ENCODE measurements at regions of chr7 and their contacts with region 1.

Region 1: DNA sequence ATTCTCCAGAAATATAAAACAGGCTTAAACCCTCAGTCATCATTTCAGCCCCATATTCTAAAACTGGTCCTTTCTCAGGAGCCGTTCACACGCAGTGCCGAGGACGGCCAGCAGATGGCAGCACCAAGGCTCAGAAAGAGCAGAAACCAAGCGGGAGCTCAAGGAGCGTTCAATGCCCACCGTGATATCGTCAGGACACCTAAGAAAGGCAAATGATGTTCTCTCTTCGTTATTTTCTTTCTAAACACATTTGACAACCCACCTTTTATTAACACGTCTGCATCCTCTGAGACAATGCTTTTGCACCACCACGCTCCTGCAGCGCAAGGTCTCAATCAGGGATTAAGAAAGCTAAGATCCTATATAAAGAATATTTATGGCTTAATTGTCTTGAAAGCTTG is 45.7 kb upstream of the RBM33 start:
- DNase-seq: peak; percentile 68 to 94 (median 78)
- ATAC-seq: peak; percentile 87
- H3K4me3 ChIP-seq: no peak overlapping the region
- H3K27ac ChIP-seq: no peak overlapping the region
- H3K4me1 ChIP-seq: peaks cover 0 to 37% of the 10 kb centered on the region in 2 donors
- H3K27me3 ChIP-seq: peaks cover 0 to 12% of the 10 kb centered on the region in 2 donors
- CTCF ChIP-seq: peak; percentile 97 to 99

Region 2: GRCh38 chr7:155763691-155764437 is 165.1 kb after region 1 on chr7:
- intact Hi-C with region 1: loop called in 1 of 2 experiments (anchors 10 kb)
- DNase-seq: peak in 1 of 4 donors; percentile 33
- ATAC-seq: peak; percentile 51
- H3K4me3 ChIP-seq: no peak overlapping the region
- H3K27ac ChIP-seq: peak overlapping the region; percentile 34 to 75
- H3K4me1 ChIP-seq: peaks cover 0 to 55% of the 10 kb centered on the region in 2 donors
- H3K27me3 ChIP-seq: no peaks in the 10 kb centered on the region
- CTCF ChIP-seq: no peak

Region 3: DNA sequence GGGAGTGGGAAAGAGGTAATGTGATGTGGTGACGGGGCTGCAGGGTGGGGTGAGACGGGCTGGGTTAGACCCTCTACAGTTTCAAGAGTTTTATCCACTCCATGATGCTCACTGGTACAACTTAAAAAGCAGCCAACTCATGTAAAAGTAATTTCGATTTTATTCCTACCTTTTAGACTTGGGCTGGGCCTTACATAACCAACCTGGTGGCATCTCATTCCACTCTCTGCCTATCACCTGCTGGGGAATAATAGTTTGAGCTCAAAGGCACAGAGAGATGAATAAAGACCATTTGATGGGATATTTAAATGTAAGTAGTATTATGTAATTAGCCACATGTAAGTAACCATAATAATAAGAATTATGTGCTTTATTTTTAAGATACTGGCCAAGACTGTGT is 675.7 kb after region 1 on chr7:
- intact Hi-C with region 1: no loop called
- DNase-seq: no peak
- ATAC-seq: no peak
- H3K4me3 ChIP-seq: no peak overlapping the region
- H3K27ac ChIP-seq: no peak overlapping the region
- H3K4me1 ChIP-seq: no peaks in the 10 kb centered on the region
- H3K27me3 ChIP-seq: no peaks in the 10 kb centered on the region
- CTCF ChIP-seq: no peak

Measured in left lung (tissue), 14 donors.